GM12878 (cell line): ENCODE measurements at regions of chr19 and their contacts with region 1.

Region 1: DNA sequence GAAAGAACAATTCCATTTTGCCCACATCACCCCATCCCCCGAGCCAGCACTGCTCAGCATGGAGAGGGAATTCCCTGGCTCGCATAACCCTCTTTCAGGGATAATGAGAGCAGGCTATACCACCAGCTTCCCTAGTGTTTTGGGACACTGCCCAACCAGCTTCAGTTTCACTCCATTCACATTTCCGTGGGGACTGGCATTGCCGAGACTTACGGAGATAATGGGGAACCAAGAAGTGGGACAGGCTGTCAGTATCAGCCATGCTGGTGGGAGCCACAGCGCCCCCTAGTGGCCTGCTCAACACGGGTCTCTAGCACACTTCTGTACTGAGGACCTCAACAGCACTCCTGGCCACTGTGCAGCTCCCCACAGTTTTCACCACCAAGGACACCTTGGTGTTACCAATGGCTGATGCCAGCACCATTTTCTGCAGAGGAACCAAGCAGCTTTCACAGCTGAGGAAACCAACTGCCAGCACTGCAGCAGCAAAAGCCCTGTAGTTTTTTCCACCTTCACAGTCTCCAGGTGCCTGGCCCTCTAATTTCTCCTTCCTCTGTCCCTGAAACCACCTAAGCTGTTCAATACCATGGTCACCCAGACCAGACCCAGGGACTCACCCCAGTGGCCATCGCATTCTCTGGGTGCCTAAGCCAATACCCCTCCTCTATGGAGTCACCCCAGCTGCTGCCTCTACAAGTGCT is 23.7 kb downstream of the SLC6A16 start:
- DNase-seq: peak; percentile 40
- ATAC-seq: peak; percentile 100
- H3K4me3 ChIP-seq: no peak overlapping the region
- H3K27ac ChIP-seq: no peak overlapping the region
- H3K4me1 ChIP-seq: no peaks in the 10 kb centered on the region; the same call in 1 of the 2 replicates
- H3K27me3 ChIP-seq: no peaks in the 10 kb centered on the region
- CTCF ChIP-seq: peak; percentile 88 to 96 (median 96); a peak in 5 of 6 replicates
- EP300 ChIP-seq: no peak
- POLR2A ChIP-seq: no peak
- RAD21 ChIP-seq: peak; percentile 49

Region 2: DNA sequence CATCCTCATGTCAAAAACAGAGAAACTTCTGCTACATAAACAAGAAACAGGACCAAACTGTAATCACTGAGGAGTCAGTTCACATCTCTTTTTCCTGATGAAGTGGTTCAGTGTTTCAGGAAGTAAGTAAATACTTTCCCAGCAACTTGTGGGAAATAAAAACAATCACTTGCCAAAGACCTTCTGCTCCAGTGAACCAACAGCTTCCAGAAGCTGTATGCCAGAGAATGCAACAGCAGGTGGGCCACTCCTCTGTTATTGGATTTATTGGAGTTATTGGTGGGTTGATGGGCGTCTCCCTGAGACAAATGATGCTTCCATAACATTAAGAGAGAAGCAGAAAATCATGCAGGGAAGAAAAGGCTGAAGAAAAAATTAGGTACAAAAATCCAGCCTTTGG is 13.8 kb after region 1 on chr19:
- CTCF ChIA-PET with region 1: interaction called, 20 read pairs
- POLR2A ChIA-PET with region 1: no interaction called
- RAD21 ChIA-PET with region 1: no interaction called
- SMC1A ChIA-PET with region 1: interaction called, 5 read pairs
- in situ Hi-C with region 1: no loop called
- intact Hi-C with region 1: no loop called
- DNase-seq: no peak
- ATAC-seq: no peak
- H3K4me3 ChIP-seq: no peak overlapping the region
- H3K27ac ChIP-seq: no peak overlapping the region
- H3K4me1 ChIP-seq: no peaks in the 10 kb centered on the region
- H3K27me3 ChIP-seq: no peaks in the 10 kb centered on the region
- CTCF ChIP-seq: no peak
- EP300 ChIP-seq: no peak
- POLR2A ChIP-seq: no peak
- RAD21 ChIP-seq: no peak

Region 3: DNA sequence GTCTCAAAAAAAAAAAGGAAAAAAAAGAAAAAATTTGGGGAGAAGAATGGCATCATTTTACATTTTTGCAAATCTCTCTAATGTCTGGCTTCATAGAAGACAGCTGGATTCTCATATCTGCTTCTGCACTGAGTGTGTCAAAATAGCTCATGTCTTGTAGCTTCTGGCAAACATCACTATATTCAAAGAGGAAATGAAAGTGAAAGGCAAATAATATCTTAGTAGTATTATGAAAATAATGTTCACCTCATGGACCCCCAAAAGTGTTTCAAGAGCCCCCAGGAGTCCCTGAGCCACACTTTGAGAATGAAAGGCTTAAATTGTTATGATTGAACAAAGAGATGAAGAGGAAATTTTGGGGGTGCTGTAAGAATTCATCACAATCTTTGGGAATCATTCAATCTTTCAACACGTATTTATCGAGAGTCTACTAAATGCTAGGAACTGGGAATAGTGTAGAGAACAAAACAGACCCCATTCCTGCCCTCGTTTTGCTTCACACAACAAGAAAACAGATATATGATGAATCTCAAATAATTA is 24.9 kb after region 1 on chr19:
- CTCF ChIA-PET with region 1: interaction called, 22 read pairs
- POLR2A ChIA-PET with region 1: interaction called, 5 read pairs
- RAD21 ChIA-PET with region 1: interaction called, 6 read pairs
- SMC1A ChIA-PET with region 1: interaction called, 11 read pairs
- in situ Hi-C with region 1: no loop called
- intact Hi-C with region 1: no loop called
- DNase-seq: no peak
- ATAC-seq: peak; percentile 60
- H3K4me3 ChIP-seq: no peak overlapping the region; the same call in 1 of the 2 replicates
- H3K27ac ChIP-seq: peak overlapping the region; percentile 87
- H3K4me1 ChIP-seq: peaks cover 49% of the 10 kb centered on the region
- H3K27me3 ChIP-seq: no peaks in the 10 kb centered on the region
- CTCF ChIP-seq: no peak
- EP300 ChIP-seq: peak in 1 of 2 experiments; percentile 54; a peak in 1 of 4 replicates
- POLR2A ChIP-seq: no peak
- RAD21 ChIP-seq: no peak

Region 4: GRCh38 chr19:49443366-49444099 is 142.2 kb after region 1 on chr19:
- CTCF ChIA-PET with region 1: interaction called, 3 read pairs
- POLR2A ChIA-PET with region 1: no interaction called
- RAD21 ChIA-PET with region 1: no interaction called
- SMC1A ChIA-PET with region 1: no interaction called
- in situ Hi-C with region 1: no loop called
- intact Hi-C with region 1: loop called (anchors 1 kb)
- DNase-seq: peak; percentile 80
- ATAC-seq: peak; percentile 92
- H3K4me3 ChIP-seq: peak overlapping the region; percentile 81
- H3K27ac ChIP-seq: peak overlapping the region; percentile 21; the same call in 1 of the 2 replicates
- H3K4me1 ChIP-seq: no peaks in the 10 kb centered on the region
- H3K27me3 ChIP-seq: peaks cover 9 to 20% of the 10 kb centered on the region in 2 experiments
- CTCF ChIP-seq: peak; percentile 70 to 92 (median 90)
- EP300 ChIP-seq: no peak
- POLR2A ChIP-seq: no peak
- RAD21 ChIP-seq: peak; percentile 78